CD4-positive, alpha-beta T cell (primary cell): ENCODE measurements at regions of chr19 and their contacts with region 1.

Region 1: GRCh38 chr19:2962045-2962561 is 15.3 kb upstream of the TLE6 start:
- DNase-seq: peak in 12 of 14 experiments; percentile 6 to 92 (median 40)
- ATAC-seq: peak; percentile 97
- H3K4me3 ChIP-seq: no peak overlapping the region
- H3K4me3 Mint-ChIP-seq: peak overlapping the region; percentile 8
- H3K27ac ChIP-seq: no peak overlapping the region
- H3K27ac Mint-ChIP-seq: peak overlapping the region; percentile 21
- H3K4me1 ChIP-seq: peaks cover 2% of the 10 kb centered on the region
- H3K4me1 Mint-ChIP-seq: peaks cover 7% of the 10 kb centered on the region
- H3K27me3 ChIP-seq: no peaks in the 10 kb centered on the region
- H3K27me3 Mint-ChIP-seq: peaks cover 4% of the 10 kb centered on the region
- CTCF ChIP-seq: peak; percentile 76

Region 2: DNA sequence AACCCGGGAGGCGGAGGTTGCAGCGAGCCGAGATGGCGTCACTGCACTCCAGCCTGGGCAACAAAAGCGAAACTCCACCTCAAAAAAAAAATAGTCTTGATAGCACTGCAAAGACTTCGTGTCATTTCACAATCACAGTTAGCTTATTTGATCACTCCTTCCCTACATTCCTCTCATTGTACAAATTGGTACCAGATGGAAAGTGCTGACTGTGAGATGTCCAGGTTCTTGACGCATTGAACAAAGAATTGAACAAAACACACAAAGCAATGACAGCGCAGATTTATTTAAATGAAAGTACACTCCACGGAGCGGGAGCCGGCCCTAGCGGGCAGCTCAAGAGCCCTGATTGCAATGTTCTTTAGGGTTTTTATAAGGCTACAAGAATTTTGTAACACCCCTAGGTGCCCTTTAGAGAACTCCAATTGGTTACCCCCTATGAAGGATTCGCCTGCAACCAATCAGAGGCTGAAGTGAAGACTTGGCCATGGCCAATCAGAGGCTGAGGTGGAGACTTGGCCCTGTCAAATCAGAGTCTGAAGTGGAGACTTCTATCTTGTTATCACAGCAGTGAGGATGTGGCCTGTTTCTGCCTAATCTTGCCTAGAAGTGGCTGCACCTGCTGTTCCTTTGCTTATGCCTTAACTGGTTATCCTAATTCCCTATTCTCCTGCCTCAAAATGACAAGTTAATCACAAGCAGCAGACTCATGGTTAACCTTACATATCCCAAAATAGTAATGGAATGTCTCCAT is 78.2 kb before region 1 on chr19:
- CTCF ChIA-PET with region 1: no interaction called
- POLR2A ChIA-PET with region 1: no interaction called
- intact Hi-C with region 1: no loop called
- DNase-seq: no peak
- ATAC-seq: no peak
- H3K4me3 ChIP-seq: no peak overlapping the region
- H3K4me3 Mint-ChIP-seq: no peak overlapping the region
- H3K27ac ChIP-seq: no peak overlapping the region
- H3K27ac Mint-ChIP-seq: no peak overlapping the region
- H3K4me1 ChIP-seq: peaks cover 13% of the 10 kb centered on the region
- H3K4me1 Mint-ChIP-seq: peaks cover 8% of the 10 kb centered on the region
- H3K27me3 ChIP-seq: no peaks in the 10 kb centered on the region
- H3K27me3 Mint-ChIP-seq: no peaks in the 10 kb centered on the region
- CTCF ChIP-seq: no peak

Region 3: GRCh38 chr19:3075895-3076431 is 113.9 kb after region 1 on chr19:
- CTCF ChIA-PET with region 1: no interaction called
- POLR2A ChIA-PET with region 1: interaction called, 4 read pairs
- intact Hi-C with region 1: loop called in 1 of 2 experiments (anchors 1 kb)
- DNase-seq: peak; percentile 61 to 90 (median 76)
- ATAC-seq: peak; percentile 99
- H3K4me3 ChIP-seq: no peak overlapping the region
- H3K4me3 Mint-ChIP-seq: no peak overlapping the region
- H3K27ac ChIP-seq: no peak overlapping the region
- H3K27ac Mint-ChIP-seq: no peak overlapping the region
- H3K4me1 ChIP-seq: peaks cover 10% of the 10 kb centered on the region
- H3K4me1 Mint-ChIP-seq: peaks cover 3% of the 10 kb centered on the region
- H3K27me3 ChIP-seq: no peaks in the 10 kb centered on the region
- H3K27me3 Mint-ChIP-seq: no peaks in the 10 kb centered on the region
- CTCF ChIP-seq: peak; percentile 90

Region 4: GRCh38 chr19:3108775-3109174 is 146.7 kb after region 1 on chr19:
- CTCF ChIA-PET with region 1: interaction called, 27 read pairs
- POLR2A ChIA-PET with region 1: interaction called, 5 read pairs
- intact Hi-C with region 1: loop called (anchors 1 kb)
- DNase-seq: peak; percentile 60 to 85 (median 67)
- ATAC-seq: peak; percentile 66
- H3K4me3 ChIP-seq: no peak overlapping the region
- H3K4me3 Mint-ChIP-seq: no peak overlapping the region
- H3K27ac ChIP-seq: no peak overlapping the region
- H3K27ac Mint-ChIP-seq: no peak overlapping the region
- H3K4me1 ChIP-seq: peaks cover 12% of the 10 kb centered on the region
- H3K4me1 Mint-ChIP-seq: peaks cover 10% of the 10 kb centered on the region
- H3K27me3 ChIP-seq: no peaks in the 10 kb centered on the region
- H3K27me3 Mint-ChIP-seq: peaks cover 3% of the 10 kb centered on the region
- CTCF ChIP-seq: peak; percentile 88

Region 5: DNA sequence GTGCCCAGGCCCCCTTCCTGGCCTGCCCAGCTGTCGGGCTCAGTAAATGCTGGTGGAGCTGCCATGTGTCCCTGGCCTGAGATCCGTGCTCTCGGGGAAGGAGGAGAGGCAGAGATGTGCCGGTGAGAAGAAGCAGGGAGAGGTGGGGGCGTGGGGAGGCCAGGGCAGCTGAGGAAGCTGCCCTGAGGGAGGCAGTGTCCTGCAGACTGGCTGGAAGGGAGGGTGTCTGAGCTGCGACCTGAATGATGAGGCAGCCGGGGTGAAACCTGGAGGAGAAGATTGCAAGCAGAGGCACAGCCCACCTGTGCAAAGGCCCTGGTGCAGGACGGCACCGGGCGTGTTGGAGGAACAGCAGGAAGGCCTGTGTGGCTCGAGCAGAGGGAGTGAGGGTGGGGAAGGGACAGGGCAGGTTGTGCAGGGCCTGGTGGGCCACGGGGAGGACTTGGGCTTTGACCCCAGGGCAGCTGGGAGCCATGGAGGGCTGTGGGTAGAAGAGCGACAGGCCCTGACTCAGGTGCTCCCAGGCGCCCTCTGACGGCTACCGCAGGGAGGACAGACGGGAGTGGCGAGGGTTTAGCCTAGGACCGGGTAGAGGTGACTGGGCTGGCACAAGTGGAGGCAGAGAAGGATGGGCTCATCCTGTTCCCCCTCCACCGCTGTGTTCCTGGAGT is 248.4 kb after region 1 on chr19:
- CTCF ChIA-PET with region 1: interaction called, 6 read pairs
- POLR2A ChIA-PET with region 1: no interaction called
- intact Hi-C with region 1: loop called (anchors 1 to 2 kb)
- DNase-seq: peak; percentile 52 to 78 (median 66)
- ATAC-seq: peak; percentile 94
- H3K4me3 ChIP-seq: no peak overlapping the region
- H3K4me3 Mint-ChIP-seq: no peak overlapping the region
- H3K27ac ChIP-seq: no peak overlapping the region
- H3K27ac Mint-ChIP-seq: no peak overlapping the region
- H3K4me1 ChIP-seq: peaks cover 6% of the 10 kb centered on the region
- H3K4me1 Mint-ChIP-seq: no peaks in the 10 kb centered on the region
- H3K27me3 ChIP-seq: no peaks in the 10 kb centered on the region
- H3K27me3 Mint-ChIP-seq: no peaks in the 10 kb centered on the region
- CTCF ChIP-seq: peak; percentile 70

Region 6: DNA sequence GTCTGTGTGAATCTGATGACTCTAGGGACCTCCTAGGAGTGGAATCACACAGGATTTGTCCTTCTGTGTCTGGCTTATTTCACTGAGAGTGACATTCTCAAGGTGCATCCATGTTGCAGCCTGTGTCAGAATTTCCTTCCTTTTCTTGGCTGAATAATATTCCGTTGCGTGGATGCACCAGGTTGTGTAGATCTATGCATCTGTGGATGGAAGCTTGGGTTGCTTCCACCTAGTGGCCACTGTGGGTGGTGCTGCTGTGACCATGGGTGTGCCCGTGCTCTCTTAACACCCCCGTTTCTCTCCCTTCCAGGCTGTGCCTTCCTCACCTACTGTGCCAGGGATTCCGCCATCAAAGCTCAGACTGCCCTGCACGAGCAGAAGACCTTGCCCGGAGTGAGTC is 288.6 kb after region 1 on chr19:
- CTCF ChIA-PET with region 1: no interaction called
- POLR2A ChIA-PET with region 1: no interaction called
- intact Hi-C with region 1: loop called in 1 of 2 experiments (anchors 2 kb)
- DNase-seq: peak in 12 of 14 experiments; percentile 13 to 64 (median 36)
- ATAC-seq: peak; percentile 67
- H3K4me3 ChIP-seq: no peak overlapping the region
- H3K4me3 Mint-ChIP-seq: no peak overlapping the region
- H3K27ac ChIP-seq: no peak overlapping the region
- H3K27ac Mint-ChIP-seq: no peak overlapping the region
- H3K4me1 ChIP-seq: no peaks in the 10 kb centered on the region
- H3K4me1 Mint-ChIP-seq: no peaks in the 10 kb centered on the region
- H3K27me3 ChIP-seq: peaks cover 3 to 10% of the 10 kb centered on the region in 2 experiments
- H3K27me3 Mint-ChIP-seq: peaks cover 15% of the 10 kb centered on the region
- CTCF ChIP-seq: peak; percentile 68